PC-9 (cell line): ENCODE measurements at regions of chr3 and their contacts with region 1.

Region 1: DNA sequence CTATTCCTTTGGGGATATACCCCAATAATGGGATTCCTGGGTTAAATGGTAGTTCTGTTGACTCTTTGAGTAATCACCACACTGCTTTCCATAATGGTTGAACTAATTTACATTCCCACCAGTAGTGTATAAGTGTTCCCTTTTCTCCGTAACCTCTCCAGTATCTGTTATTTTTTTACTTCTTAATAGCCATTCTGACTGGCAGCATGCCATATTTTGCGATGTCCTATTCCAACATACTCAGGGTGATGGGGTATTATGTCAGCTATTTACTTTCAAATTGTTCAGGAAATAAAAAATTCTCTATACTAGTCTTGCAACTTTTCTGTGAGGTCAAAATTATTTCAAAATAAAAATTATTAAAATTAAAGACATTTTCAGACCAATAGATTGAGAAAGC is 9.1 kb upstream of the PARP14 start:
- DNase-seq: no peak
- H3K4me3 ChIP-seq: no peak overlapping the region
- H3K27ac ChIP-seq: no peak overlapping the region
- H3K4me1 ChIP-seq: 0 out of 2 replicates have a peak, but pooled peaks cover 12% of the 10 kb centered on the region
- H3K27me3 ChIP-seq: no peaks in the 10 kb centered on the region
- CTCF ChIP-seq: no peak

Region 2: DNA sequence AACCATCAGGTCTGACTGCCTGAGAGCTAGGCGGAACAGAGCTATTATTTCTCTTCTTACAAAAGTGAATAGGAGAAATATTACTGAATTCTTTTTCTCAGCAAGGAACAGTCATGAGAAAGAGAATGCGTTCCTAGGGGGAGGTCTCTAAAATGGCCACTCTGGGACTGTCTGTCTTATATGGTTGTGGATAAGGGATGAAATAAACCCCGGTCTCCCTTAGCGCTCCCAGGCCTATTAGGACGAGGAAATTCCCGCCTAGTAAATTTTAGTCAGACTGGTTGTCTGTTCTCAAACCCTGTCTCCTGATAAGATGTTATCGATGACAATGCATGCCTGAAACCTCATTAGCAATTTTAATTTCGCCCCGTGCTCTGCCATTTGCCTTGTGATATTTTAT is 235.6 kb before region 1 on chr3:
- CTCF ChIA-PET with region 1: no interaction called
- POLR2A ChIA-PET with region 1: no interaction called
- intact Hi-C with region 1: no loop called
- DNase-seq: no peak
- H3K4me3 ChIP-seq: no peak overlapping the region
- H3K27ac ChIP-seq: no peak overlapping the region
- H3K4me1 ChIP-seq: no peaks in the 10 kb centered on the region
- H3K27me3 ChIP-seq: no peaks in the 10 kb centered on the region
- CTCF ChIP-seq: no peak

Region 3: DNA sequence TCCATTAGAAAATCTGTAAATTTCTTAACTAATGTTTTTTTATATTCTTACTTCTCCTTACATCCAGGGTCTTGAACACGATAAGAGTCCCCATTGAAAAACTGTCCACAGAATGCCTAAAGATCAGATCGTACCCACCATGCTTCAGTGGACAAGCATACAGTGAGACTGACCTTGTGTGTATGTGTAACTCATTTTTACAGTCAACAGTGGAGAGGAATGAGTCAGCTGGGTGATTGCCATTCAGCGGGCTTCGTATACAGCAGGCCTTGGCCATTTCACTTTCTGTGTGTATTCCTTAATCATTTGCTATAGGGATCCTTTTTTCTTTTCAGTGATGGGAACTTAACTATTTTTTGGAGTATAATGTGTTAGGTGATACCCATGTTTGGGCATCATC is 19.6 kb after region 1 on chr3:
- CTCF ChIA-PET with region 1: no interaction called
- POLR2A ChIA-PET with region 1: interaction called, 10 read pairs
- intact Hi-C with region 1: no loop called
- DNase-seq: no peak
- H3K4me3 ChIP-seq: no peak overlapping the region
- H3K27ac ChIP-seq: no peak overlapping the region
- H3K4me1 ChIP-seq: no peaks in the 10 kb centered on the region
- H3K27me3 ChIP-seq: no peaks in the 10 kb centered on the region
- CTCF ChIP-seq: no peak

Region 4: DNA sequence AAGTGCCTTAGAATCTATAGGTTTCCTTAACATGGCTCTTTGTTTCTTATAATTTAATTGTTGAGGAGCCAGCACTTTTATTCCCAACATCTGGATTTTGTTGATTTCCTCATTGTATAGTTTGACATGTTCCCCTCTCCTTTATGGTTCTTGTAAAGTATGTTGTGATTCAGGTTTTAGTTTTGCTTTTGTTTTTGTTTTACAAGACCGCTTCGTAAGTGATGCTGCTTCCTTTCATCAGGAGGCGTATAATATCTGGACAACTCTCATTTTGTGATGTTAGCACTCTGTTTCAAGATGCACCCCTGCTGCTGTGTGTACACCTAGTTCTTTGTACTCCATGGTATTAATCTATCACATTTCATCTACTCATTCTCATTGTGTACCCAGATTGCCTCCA is 172.1 kb after region 1 on chr3:
- CTCF ChIA-PET with region 1: no interaction called
- POLR2A ChIA-PET with region 1: no interaction called
- intact Hi-C with region 1: no loop called
- DNase-seq: no peak
- H3K4me3 ChIP-seq: no peak overlapping the region
- H3K27ac ChIP-seq: no peak overlapping the region
- H3K4me1 ChIP-seq: no peaks in the 10 kb centered on the region
- H3K27me3 ChIP-seq: no peaks in the 10 kb centered on the region
- CTCF ChIP-seq: no peak

Region 5: GRCh38 chr3:122902326-122902725 is 230.8 kb after region 1 on chr3:
- CTCF ChIA-PET with region 1: no interaction called
- POLR2A ChIA-PET with region 1: no interaction called
- intact Hi-C with region 1: no loop called
- DNase-seq: peak; percentile 29 to 39
- H3K4me3 ChIP-seq: no peak overlapping the region
- H3K27ac ChIP-seq: no peak overlapping the region
- H3K4me1 ChIP-seq: peaks cover 10% of the 10 kb centered on the region
- H3K27me3 ChIP-seq: no peaks in the 10 kb centered on the region
- CTCF ChIP-seq: no peak